ENCODE measurements at regions of chr19 and their contacts with region 1.

Region 1: DNA sequence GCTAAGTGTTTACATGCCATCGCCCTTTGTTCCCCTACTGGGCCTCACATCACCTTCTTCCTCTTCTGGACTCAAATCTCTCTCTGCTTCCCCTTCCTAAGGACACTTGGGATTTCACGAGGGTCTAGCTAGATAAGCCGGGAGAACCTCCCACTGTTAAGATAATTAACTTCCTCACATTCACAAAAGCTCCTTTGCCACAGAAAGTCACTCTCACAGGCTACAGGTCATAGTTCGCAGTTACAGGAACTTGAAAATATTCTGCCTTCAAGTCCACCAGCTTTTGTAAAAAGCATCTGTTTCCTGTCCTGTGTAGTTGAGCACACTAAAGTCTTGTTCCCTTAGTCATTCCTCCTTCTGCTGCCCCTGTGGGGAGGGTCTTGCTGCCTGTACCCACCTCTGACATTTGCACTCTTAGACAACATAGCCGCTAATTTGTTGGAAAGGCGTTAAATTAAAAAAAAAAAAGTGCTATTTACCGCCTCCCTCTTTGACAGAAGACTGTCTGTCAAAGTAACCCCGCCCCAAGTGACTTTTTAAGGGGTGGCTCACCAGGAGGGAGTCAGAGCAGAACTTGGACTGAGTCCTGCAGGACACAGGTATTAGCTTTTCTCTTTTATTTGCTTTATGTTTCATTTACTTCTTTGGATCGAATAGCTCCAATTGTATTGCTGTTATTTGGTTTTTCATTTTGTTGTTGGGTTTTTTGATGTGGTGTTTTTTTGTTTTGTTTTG is 26.8 kb upstream of the CEACAM21 start:
- DNase-seq: peak; percentile 88
- H3K4me3 Mint-ChIP-seq: peak overlapping the region; percentile 99
- H3K27ac Mint-ChIP-seq: peak overlapping the region; percentile 99
- H3K4me1 Mint-ChIP-seq: peaks cover 62% of the 10 kb centered on the region
- H3K27me3 Mint-ChIP-seq: no peaks in the 10 kb centered on the region

Region 2: GRCh38 chr19:41298348-41298964 is 250.7 kb before region 1 on chr19:
- CTCF ChIA-PET with region 1: no interaction called
- POLR2A ChIA-PET with region 1: no interaction called
- DNase-seq: no peak
- H3K4me3 Mint-ChIP-seq: no peak overlapping the region
- H3K27ac Mint-ChIP-seq: peak overlapping the region; percentile 98
- H3K4me1 Mint-ChIP-seq: peaks cover 91% of the 10 kb centered on the region
- H3K27me3 Mint-ChIP-seq: no peaks in the 10 kb centered on the region

Region 3: DNA sequence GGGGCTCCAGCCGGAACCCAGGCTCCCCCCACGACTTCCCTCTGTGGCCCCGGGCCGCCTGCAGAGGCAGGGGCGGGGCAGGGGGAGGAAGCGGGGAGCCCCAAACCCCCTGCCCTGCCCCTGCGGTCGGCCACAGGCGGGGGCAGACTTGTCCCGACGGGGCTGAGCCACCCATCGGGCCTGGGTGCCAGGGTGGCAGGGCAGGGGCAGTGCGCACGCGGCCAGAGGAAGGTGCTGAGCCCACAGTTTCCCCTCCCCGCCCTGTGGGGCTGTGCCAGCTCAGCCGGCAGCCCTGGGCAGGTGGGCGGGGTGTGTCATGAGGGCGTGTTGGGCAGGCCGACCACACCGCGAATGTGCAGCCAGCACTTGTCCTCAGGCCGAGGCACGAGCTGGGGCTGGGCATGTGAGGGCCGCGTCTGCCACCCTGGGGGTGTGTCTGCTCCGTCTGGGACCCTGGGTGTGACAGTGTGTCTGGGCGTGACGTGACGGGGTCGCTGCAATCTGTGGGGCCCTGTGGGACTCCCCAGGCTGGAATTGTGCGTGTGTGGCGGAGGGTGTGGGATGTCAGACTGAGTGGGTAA is 221.5 kb before region 1 on chr19:
- CTCF ChIA-PET with region 1: no interaction called
- POLR2A ChIA-PET with region 1: no interaction called
- DNase-seq: peak; percentile 89
- H3K4me3 Mint-ChIP-seq: peak overlapping the region; percentile 68
- H3K27ac Mint-ChIP-seq: peak overlapping the region; percentile 95
- H3K4me1 Mint-ChIP-seq: peaks cover 73% of the 10 kb centered on the region
- H3K27me3 Mint-ChIP-seq: no peaks in the 10 kb centered on the region

Region 4: DNA sequence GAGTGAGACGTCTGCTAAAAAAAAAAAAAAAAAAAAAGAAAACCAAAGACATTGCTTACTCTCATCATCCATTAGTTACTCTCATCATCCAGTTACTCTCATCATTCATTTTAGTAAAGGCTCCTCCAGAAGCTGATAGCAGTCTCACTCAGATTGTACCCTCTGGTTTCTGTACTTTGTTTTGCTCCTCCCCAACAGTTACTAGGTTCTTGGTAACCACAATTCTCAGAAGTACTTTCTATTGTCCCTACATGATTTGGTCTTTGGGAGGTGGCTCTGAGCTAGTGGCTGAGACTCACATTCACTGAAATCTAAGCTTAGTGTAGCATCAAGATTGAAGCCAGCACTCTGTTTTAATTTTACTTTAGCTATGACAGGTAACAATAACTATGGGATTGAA is 91.9 kb before region 1 on chr19:
- CTCF ChIA-PET with region 1: interaction called, 3 read pairs
- POLR2A ChIA-PET with region 1: interaction called, 14 read pairs
- DNase-seq: no peak
- H3K4me3 Mint-ChIP-seq: peak overlapping the region; percentile 45
- H3K27ac Mint-ChIP-seq: peak overlapping the region; percentile 78
- H3K4me1 Mint-ChIP-seq: peaks cover 45% of the 10 kb centered on the region
- H3K27me3 Mint-ChIP-seq: peaks cover 3% of the 10 kb centered on the region

Region 5: DNA sequence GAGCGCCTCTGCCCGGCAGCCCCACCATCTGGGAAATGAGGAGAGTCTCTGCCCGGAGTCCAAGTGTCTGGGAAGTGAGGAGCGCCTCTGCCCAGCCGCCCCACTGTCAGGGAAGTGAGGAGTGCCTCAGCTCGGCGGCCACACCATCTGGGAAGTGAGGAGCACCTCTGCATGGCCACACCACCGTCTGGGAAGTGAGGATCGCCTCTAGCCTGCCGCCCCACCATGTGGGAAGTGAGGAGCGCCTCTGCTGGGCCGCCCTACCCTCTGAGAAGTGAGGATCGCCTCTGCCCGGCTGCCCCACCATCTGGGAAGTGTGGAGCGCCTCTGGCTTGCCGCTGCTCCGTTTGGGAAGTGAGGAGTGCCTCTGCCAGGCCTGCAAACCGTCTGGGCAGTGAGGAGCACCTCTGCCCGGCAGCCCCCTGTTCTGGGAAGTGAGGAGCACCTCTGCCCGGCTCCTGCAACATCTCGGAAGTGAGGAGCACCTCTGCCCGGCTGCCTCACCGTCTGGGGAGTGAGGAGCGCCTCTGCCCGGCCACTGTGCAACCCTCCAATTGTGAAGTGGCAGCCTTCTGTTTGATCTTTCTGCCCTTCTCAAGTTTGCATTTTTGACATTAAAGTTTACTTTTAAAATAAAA is 34.0 kb before region 1 on chr19:
- CTCF ChIA-PET with region 1: no interaction called
- POLR2A ChIA-PET with region 1: no interaction called
- DNase-seq: no peak
- H3K4me3 Mint-ChIP-seq: no peak overlapping the region
- H3K27ac Mint-ChIP-seq: no peak overlapping the region
- H3K4me1 Mint-ChIP-seq: peaks cover 15% of the 10 kb centered on the region
- H3K27me3 Mint-ChIP-seq: peaks cover 26% of the 10 kb centered on the region

Region 6: GRCh38 chr19:41563854-41564514 is 14.9 kb after region 1 on chr19:
- CTCF ChIA-PET with region 1: interaction called, 193 read pairs
- POLR2A ChIA-PET with region 1: interaction called, 173 read pairs
- DNase-seq: peak; percentile 46
- H3K4me3 Mint-ChIP-seq: no peak overlapping the region
- H3K27ac Mint-ChIP-seq: no peak overlapping the region
- H3K4me1 Mint-ChIP-seq: peaks cover 64% of the 10 kb centered on the region
- H3K27me3 Mint-ChIP-seq: no peaks in the 10 kb centered on the region

Region 7: DNA sequence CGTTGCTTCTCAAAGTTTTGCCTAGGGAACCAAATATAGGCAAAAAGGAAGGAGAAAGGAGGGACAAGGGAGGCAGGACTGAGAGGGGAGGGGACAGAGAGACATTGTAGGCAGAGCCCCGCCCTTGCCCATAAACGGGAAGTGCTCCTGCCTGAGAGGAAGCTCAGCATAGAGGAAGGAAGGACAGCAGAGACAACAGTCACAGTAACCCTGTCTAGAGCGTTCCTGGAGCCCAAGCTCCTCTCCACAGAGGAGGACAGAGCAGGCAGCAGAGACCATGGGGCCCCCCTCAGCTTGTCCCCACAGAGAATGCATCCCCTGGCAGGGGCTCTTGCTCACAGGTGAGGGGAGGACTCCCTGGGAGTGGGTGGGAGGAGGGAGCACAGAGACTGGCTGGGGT is 26.9 kb after region 1 on chr19 and contains the start of gene CEACAM21:
- CTCF ChIA-PET with region 1: interaction called, 193 read pairs
- POLR2A ChIA-PET with region 1: interaction called, 25 read pairs
- DNase-seq: peak; percentile 74
- H3K4me3 Mint-ChIP-seq: peak within 1 kb of the TSS; percentile 75
- H3K27ac Mint-ChIP-seq: peak within 1 kb of the TSS; percentile 77
- H3K4me1 Mint-ChIP-seq: peaks cover 30% of the 10 kb centered on the region
- H3K27me3 Mint-ChIP-seq: no peaks in the 10 kb centered on the region
- total RNA-seq, gene CEACAM21: 77.0 to 77.8 TPM

Measured in activated CD4-positive, alpha-beta memory T cell treated with anti-CD3 and anti-CD28 coated beads, Interleukin-2, amount 10 ng/mL, durations not matched to agents 7 days and 5 days (primary cell).